Panc1 (cell line): ENCODE measurements at regions of chr12 and their contacts with region 1.

Region 1: GRCh38 chr12:43728117-43728516 is 30.5 kb downstream of the PUS7L start:
- DNase-seq: no peak
- ATAC-seq: no peak
- H3K4me3 ChIP-seq: no peak overlapping the region
- H3K27ac ChIP-seq: no peak overlapping the region
- H3K4me1 ChIP-seq: no peaks in the 10 kb centered on the region
- H3K27me3 ChIP-seq: no peaks in the 10 kb centered on the region
- CTCF ChIP-seq: no peak; the same call in 1 of the 2 replicates

Region 2: GRCh38 chr12:42809226-42809625 is 918.9 kb before region 1 on chr12:
- CTCF ChIA-PET with region 1: no interaction called
- POLR2A ChIA-PET with region 1: no interaction called
- in situ Hi-C with region 1: no loop called
- intact Hi-C with region 1: loop called (anchors 5 kb)
- DNase-seq: no peak
- ATAC-seq: no peak
- H3K4me3 ChIP-seq: no peak overlapping the region
- H3K27ac ChIP-seq: no peak overlapping the region; the same call in 1 of the 2 replicates
- H3K4me1 ChIP-seq: no peaks in the 10 kb centered on the region
- H3K27me3 ChIP-seq: no peaks in the 10 kb centered on the region
- CTCF ChIP-seq: no peak

Region 3: GRCh38 chr12:43501703-43502102 is 226.4 kb before region 1 on chr12:
- CTCF ChIA-PET with region 1: no interaction called
- POLR2A ChIA-PET with region 1: no interaction called
- in situ Hi-C with region 1: no loop called
- intact Hi-C with region 1: loop called (anchors 5 kb)
- DNase-seq: no peak
- ATAC-seq: no peak
- H3K4me3 ChIP-seq: no peak overlapping the region
- H3K27ac ChIP-seq: no peak overlapping the region
- H3K4me1 ChIP-seq: no peaks in the 10 kb centered on the region
- H3K27me3 ChIP-seq: no peaks in the 10 kb centered on the region
- CTCF ChIP-seq: peak; percentile 66; the same call in 1 of the 2 replicates

Region 4: DNA sequence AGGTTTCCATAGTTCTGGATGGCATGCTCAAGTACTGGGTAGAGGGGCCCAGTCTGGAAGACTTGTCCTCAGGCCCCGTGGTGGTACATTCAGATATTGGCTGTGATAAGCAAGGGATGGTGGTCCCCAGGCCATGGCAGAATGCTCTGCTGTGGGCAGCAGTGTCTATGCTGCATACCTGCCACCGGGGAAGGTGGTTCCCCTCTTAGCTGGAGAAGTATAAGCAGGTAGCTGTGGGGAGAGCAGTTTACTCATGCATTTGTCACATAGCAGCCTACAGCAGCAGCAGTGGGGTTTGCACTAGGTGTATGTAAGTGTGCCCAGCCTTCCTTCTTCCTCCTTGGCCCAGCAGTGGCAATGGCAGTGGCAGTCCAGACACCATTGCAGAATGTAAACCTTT is 106.9 kb before region 1 on chr12:
- CTCF ChIA-PET with region 1: no interaction called
- POLR2A ChIA-PET with region 1: no interaction called
- in situ Hi-C with region 1: no loop called
- intact Hi-C with region 1: no loop called
- DNase-seq: no peak
- ATAC-seq: no peak
- H3K4me3 ChIP-seq: no peak overlapping the region
- H3K27ac ChIP-seq: no peak overlapping the region
- H3K4me1 ChIP-seq: no peaks in the 10 kb centered on the region
- H3K27me3 ChIP-seq: no peaks in the 10 kb centered on the region
- CTCF ChIP-seq: no peak

Region 5: GRCh38 chr12:44127966-44128710 is 400.0 kb after region 1 on chr12:
- CTCF ChIA-PET with region 1: no interaction called
- POLR2A ChIA-PET with region 1: no interaction called
- in situ Hi-C with region 1: no loop called
- intact Hi-C with region 1: no loop called
- DNase-seq: no peak
- ATAC-seq: no peak
- H3K4me3 ChIP-seq: no peak overlapping the region
- H3K27ac ChIP-seq: no peak overlapping the region
- H3K4me1 ChIP-seq: no peaks in the 10 kb centered on the region
- H3K27me3 ChIP-seq: no peaks in the 10 kb centered on the region
- CTCF ChIP-seq: no peak